K562 (cell line): ENCODE measurements at regions of chr12 and their contacts with region 1.

Region 1: DNA sequence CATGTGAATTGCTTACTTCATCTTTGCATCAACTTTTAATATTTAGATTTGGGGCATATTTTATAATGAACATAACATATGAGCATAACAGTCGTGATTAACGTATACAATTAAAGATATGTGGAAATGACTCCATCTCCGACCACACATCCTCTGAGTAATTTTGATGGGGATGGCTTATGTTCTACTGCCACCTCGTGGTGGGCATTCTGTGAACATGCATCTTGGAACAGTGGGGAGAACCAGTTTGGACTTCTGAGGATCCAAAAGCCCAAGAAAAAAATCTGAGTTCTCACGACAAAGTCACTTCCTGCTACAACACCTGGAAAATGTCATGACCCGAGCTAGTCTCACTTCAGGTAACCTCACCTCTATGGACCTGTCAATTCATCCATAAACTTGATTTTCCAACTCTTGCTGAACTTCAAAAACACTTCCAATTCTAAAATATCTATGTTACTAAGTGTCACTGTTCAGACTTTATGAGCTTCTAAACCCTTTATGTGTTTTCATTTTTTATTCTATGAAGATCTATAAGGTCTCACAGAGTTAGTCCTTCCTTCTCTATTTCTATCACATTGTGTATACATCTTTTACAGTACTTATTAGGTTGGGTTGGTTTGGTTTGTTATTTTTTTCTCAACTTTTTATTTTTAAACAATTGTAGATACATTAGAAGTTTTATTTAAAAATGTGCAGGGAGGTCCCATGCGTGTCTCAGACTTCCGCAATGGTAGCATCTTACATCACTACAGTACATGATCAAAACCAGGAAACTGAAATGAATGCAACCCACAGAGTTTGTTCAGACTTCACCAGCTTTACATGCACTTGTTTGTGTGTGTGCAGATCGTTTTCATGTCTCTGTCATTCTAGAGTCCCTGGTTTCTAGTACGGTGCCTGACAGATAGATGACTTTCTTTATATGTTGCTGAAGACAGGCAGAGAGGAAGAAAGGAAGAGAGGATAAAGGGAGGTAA is 38.2 kb upstream of the STAB2 start:
- DNase-seq: peak; percentile 62 to 76 (median 70)
- ATAC-seq: peak; percentile 92
- H3K4me3 ChIP-seq: no peak overlapping the region
- H3K27ac ChIP-seq: no peak overlapping the region
- H3K4me1 ChIP-seq: no peaks in the 10 kb centered on the region
- H3K27me3 ChIP-seq: no peaks in the 10 kb centered on the region
- CTCF ChIP-seq: peak; percentile 76 to 89 (median 78)
- EP300 ChIP-seq: no peak
- POLR2A ChIP-seq: no peak
- RAD21 ChIP-seq: peak; percentile 90 to 93

Region 2: GRCh38 chr12:102948941-102949352 is 600.0 kb before region 1 on chr12:
- CTCF ChIA-PET with region 1: interaction called, 10 read pairs
- POLR2A ChIA-PET with region 1: no interaction called
- in situ Hi-C with region 1: no loop called
- intact Hi-C with region 1: loop called (anchors 1 kb)
- DNase-seq: peak; percentile 45 to 56 (median 52)
- ATAC-seq: peak; percentile 60; the same call in 2 of the 3 replicates
- H3K4me3 ChIP-seq: no peak overlapping the region
- H3K27ac ChIP-seq: no peak overlapping the region
- H3K4me1 ChIP-seq: peaks cover 0 to 3% of the 10 kb centered on the region in 2 experiments; a peak in 1 of 5 replicates
- H3K27me3 ChIP-seq: no peaks in the 10 kb centered on the region
- CTCF ChIP-seq: peak; percentile 67 to 86 (median 77)
- EP300 ChIP-seq: no peak
- POLR2A ChIP-seq: no peak
- RAD21 ChIP-seq: peak; percentile 55 to 77

Region 3: DNA sequence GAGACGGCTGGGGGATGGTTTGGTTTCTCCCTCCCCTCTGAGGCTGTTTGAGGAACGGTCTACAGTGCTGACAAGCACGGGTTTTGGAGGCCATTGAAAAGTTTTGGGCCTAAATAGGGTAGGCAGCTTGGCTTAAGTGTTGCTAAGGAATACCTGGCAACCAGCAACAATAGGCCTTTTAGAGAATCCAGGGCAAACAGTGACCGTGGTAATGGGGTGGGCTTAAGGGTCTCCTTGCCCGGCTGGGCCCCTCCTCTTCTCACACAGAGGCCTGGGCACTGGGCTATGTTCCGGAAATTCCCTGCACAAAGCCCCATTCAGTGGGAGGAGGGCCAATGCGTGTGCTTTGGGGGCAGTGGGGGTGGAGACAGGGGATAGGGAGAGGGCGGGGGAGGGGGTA is 536.0 kb before region 1 on chr12:
- CTCF ChIA-PET with region 1: no interaction called
- POLR2A ChIA-PET with region 1: no interaction called
- in situ Hi-C with region 1: no loop called
- intact Hi-C with region 1: no loop called
- DNase-seq: no peak
- ATAC-seq: no peak
- H3K4me3 ChIP-seq: no peak overlapping the region
- H3K27ac ChIP-seq: no peak overlapping the region
- H3K4me1 ChIP-seq: no peaks in the 10 kb centered on the region
- H3K27me3 ChIP-seq: no peaks in the 10 kb centered on the region
- CTCF ChIP-seq: no peak
- EP300 ChIP-seq: no peak
- POLR2A ChIP-seq: no peak
- RAD21 ChIP-seq: no peak

Region 4: DNA sequence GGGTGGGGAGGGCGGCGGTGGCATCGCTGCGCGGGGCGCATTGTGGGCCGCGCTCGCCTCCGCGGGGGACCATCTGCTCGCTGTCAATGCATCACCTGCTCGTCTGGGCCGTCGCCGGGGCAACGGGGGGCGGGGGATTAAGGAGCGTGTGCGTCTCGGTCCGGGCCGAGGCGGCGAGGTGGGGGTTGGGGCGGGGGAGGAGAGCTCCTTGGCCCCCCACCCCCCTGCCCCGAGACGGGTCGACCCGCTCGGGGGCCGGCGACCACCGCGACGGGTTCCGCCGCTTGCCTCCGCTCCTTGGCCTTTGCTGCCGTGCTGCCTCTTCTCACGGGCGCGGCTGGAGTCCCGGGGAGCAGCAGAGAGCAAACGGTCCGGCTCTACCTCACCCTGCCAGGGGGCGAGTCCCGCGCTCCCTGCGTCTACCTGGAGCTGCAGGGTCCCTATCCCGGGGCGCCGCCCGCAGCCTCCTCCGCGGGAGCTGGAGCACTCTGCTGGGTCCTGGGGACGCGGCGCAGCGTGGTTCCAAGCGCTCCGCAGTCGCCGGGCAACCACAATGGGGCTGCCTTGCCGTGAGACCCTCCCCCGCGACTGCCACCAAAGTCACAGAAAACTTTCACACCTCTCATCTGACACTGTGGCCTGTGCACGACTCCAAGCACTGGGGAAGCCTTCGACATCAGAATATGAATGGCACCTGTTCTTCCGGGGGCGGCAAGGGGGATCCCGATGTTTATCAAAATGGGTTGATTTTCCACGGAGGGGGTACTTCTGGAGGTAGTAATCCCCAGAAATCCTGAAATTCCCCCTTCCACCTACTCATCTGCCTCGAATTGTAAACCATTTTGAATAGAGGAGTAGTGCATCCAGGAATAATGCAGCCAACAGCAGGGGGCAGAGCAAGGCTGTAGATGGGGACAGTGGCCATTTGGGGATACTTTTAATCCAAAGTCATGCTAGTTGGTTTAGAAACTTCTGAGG is 53.1 kb before region 1 on chr12 and contains the start of gene C12orf42:
- CTCF ChIA-PET with region 1: interaction called, 4 read pairs
- POLR2A ChIA-PET with region 1: no interaction called
- in situ Hi-C with region 1: no loop called
- intact Hi-C with region 1: loop called (anchors 2 kb)
- DNase-seq: peak in 2 of 4 experiments; percentile 9 to 16
- ATAC-seq: peak; percentile 84
- H3K4me3 ChIP-seq: no peak within 1 kb of the TSS
- H3K27ac ChIP-seq: no peak within 1 kb of the TSS
- H3K4me1 ChIP-seq: peaks cover 0 to 5% of the 10 kb centered on the region in 2 experiments; a peak in 1 of 5 replicates
- H3K27me3 ChIP-seq: no peaks in the 10 kb centered on the region
- CTCF ChIP-seq: peak; percentile 39 to 46 (median 44); a peak in 4 of 6 replicates
- EP300 ChIP-seq: no peak
- POLR2A ChIP-seq: no peak
- RAD21 ChIP-seq: peak; percentile 16 to 35; a peak in 2 of 4 replicates
- polyA plus RNA-seq, gene C12orf42: not detected

Region 5: GRCh38 chr12:103560604-103561573 is 12.0 kb after region 1 on chr12:
- CTCF ChIA-PET with region 1: no interaction called
- POLR2A ChIA-PET with region 1: no interaction called
- in situ Hi-C with region 1: no loop called
- intact Hi-C with region 1: no loop called
- DNase-seq: no peak
- ATAC-seq: no peak
- H3K4me3 ChIP-seq: no peak overlapping the region
- H3K27ac ChIP-seq: no peak overlapping the region
- H3K4me1 ChIP-seq: no peaks in the 10 kb centered on the region
- H3K27me3 ChIP-seq: no peaks in the 10 kb centered on the region; a peak in 1 of 5 replicates
- CTCF ChIP-seq: no peak
- EP300 ChIP-seq: no peak
- POLR2A ChIP-seq: no peak
- RAD21 ChIP-seq: no peak